ENCODE measurements at regions of chr11 and their contacts with region 1.

Region 1: GRCh38 chr11:71120490-71120896 is 131.9 kb downstream of the SHANK2 start:
- DNase-seq: no peak
- ATAC-seq: no peak

Region 2: GRCh38 chr11:70755410-70756161 is 364.9 kb before region 1 on chr11:
- intact Hi-C with region 1: no loop called
- DNase-seq: peak; percentile 82
- ATAC-seq: peak; percentile 97 to 98

Region 3: GRCh38 chr11:71223671-71224660 is 103.5 kb after region 1 on chr11:
- intact Hi-C with region 1: no loop called
- DNase-seq: no peak
- ATAC-seq: no peak

Region 4: DNA sequence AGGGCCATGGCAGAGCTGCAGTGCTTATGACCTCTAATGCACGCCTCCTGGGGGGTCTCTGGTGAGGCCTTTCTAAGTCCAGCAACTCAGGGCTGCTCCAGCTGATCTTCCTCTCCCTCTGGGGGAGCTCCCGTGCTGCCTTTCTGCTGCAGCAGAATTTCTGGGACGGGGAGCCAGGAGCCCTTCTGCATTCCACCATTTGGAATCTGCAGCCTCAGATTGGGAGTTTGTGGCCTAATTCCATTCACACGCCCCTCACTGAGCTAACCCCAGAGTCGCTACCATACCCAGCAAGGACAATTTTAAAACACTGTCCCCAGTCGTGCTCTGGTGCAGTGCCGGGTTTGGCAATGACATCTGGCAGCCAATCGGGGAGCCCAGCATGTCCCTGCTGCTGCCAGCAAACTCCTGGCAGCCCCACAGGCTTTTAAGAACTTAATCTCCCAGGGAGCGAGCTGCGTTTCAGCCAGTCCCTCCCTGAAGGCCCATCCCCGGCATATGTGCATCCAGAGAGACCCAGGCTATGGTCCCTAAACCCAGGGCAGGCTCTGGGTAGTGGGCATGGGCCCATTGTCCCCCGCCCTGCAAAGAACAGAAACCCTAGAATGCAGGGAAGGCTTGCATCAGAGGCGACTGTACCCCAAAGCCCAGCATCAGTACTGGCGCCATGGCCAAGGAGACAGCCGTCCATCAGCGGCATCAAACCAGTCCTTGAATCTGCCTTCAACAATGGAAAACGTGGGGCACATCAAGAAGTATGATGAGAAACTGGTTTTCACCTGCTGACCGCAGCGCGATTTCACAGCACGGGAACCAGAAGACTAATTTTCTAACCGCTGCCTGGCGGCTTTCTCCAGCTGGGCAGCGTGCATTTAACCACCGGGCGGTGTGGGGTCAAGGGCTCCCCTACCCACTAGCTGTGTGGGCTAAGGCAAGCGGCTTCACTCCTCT is 127.3 kb after region 1 on chr11:
- intact Hi-C with region 1: no loop called
- DNase-seq: no peak
- ATAC-seq: peak; percentile 33 to 84

Region 5: GRCh38 chr11:71302911-71303310 is 182.4 kb after region 1 on chr11:
- intact Hi-C with region 1: loop called in 1 of 2 experiments (anchors 10 kb)
- DNase-seq: no peak
- ATAC-seq: no peak

Measured in left cardiac atrium (tissue), 4 donors.